Activated CD8-positive, alpha-beta T cell treated with anti-CD3 and anti-CD28 coated beads for 36 hours (primary cell): ENCODE measurements at regions of chr10 and their contacts with region 1.

Region 1: GRCh38 chr10:61903221-61903927 is 1.9 kb downstream of the ARID5B start:
- DNase-seq: peak; percentile 87
- ATAC-seq: peak; percentile 50
- H3K4me3 Mint-ChIP-seq: peak overlapping the region; percentile 86
- H3K27ac Mint-ChIP-seq: peak overlapping the region; percentile 97
- H3K4me1 Mint-ChIP-seq: peaks cover 38% of the 10 kb centered on the region
- H3K27me3 Mint-ChIP-seq: no peaks in the 10 kb centered on the region
- CTCF ChIP-seq: no peak

Region 2: DNA sequence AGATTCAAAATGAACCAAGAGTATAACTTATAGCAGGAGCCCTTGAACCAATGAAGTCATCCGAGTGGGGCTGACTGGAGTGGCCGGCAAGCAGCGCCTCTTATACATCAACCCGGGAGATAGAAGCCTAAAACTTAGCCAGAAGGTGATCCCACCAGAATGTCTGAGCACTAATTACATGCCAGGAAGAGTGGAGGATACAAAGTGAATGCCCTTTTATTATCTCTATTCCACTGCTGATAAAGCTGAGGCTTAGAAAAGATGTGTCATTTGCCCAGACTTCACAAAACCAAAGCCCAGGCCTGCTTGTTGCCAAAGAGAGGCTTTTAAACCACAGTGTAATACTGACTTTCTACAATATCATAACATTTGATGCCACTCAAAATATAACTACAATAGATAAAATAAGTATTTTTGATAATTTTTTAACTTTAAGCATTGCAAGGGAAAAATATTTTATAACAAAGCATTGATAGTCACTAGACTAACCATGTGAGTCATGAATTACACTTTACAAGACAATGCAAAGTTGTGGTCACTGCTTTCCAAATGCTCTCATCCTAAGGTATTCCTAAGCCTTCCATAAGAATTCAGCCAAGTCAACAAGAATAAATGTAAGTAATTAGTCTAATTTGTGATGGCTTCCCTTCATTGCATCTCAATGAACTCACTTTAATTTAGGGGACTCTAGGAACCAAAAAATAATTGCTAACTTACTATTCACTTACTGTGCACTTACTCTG is 60.4 kb before region 1 on chr10:
- CTCF ChIA-PET with region 1: no interaction called
- POLR2A ChIA-PET with region 1: no interaction called
- intact Hi-C with region 1: no loop called
- DNase-seq: no peak
- ATAC-seq: no peak
- H3K4me3 Mint-ChIP-seq: no peak overlapping the region
- H3K27ac Mint-ChIP-seq: no peak overlapping the region
- H3K4me1 Mint-ChIP-seq: peaks cover 10% of the 10 kb centered on the region
- H3K27me3 Mint-ChIP-seq: no peaks in the 10 kb centered on the region
- CTCF ChIP-seq: no peak

Region 3: GRCh38 chr10:61855771-61856170 is 47.6 kb before region 1 on chr10:
- CTCF ChIA-PET with region 1: no interaction called
- POLR2A ChIA-PET with region 1: no interaction called
- intact Hi-C with region 1: no loop called
- DNase-seq: no peak
- ATAC-seq: no peak
- H3K4me3 Mint-ChIP-seq: no peak overlapping the region
- H3K27ac Mint-ChIP-seq: no peak overlapping the region
- H3K4me1 Mint-ChIP-seq: no peaks in the 10 kb centered on the region
- H3K27me3 Mint-ChIP-seq: peaks cover 4% of the 10 kb centered on the region
- CTCF ChIP-seq: no peak

Region 4: DNA sequence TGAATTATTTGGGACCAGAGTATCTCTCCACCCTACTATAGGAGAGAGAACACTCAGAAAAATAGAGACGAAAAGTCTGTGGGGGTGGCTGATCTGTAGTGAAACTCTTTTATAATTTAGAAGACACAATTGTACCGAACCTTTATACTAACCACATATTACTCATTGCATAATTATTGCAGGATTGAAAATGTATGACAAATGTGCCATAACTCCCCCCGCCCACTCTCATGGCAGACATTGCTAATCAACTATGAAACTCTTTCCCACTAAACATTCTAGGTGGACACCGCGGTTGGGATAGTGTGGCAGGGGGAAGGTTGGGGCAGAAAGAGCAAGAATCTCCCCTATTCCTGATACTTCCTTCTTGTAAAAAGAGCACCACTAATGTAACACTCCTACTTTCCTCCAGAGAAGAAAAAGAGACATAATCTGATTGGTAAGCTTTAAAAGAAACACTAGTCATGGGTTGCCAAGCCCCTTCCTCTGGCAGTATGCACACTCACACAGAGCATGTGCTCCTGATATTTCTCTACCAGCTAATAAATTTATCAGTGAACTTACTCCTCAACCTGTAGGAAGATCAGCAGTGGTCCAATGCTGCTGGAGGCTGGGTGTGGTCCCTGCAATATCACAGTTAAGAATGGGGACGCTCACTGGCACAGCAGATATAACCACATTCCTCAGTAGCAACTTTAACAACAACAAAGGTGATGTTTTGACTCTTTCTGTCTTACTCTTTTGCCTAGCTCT is 20.6 kb before region 1 on chr10:
- CTCF ChIA-PET with region 1: interaction called, 50 read pairs
- POLR2A ChIA-PET with region 1: interaction called, 26 read pairs
- intact Hi-C with region 1: no loop called
- DNase-seq: peak; percentile 90
- ATAC-seq: peak; percentile 86
- H3K4me3 Mint-ChIP-seq: peak overlapping the region; percentile 43
- H3K27ac Mint-ChIP-seq: peak overlapping the region; percentile 95
- H3K4me1 Mint-ChIP-seq: peaks cover 30% of the 10 kb centered on the region
- H3K27me3 Mint-ChIP-seq: no peaks in the 10 kb centered on the region
- CTCF ChIP-seq: no peak

Region 5: GRCh38 chr10:61943674-61944410 is 40.5 kb after region 1 on chr10:
- CTCF ChIA-PET with region 1: interaction called, 98 read pairs
- POLR2A ChIA-PET with region 1: interaction called, 137 read pairs
- intact Hi-C with region 1: loop called (anchors 1 kb)
- DNase-seq: peak; percentile 58
- ATAC-seq: peak; percentile 77
- H3K4me3 Mint-ChIP-seq: peak overlapping the region; percentile 70
- H3K27ac Mint-ChIP-seq: peak overlapping the region; percentile 98
- H3K4me1 Mint-ChIP-seq: peaks cover 64% of the 10 kb centered on the region
- H3K27me3 Mint-ChIP-seq: no peaks in the 10 kb centered on the region
- CTCF ChIP-seq: no peak

Region 6: GRCh38 chr10:61992671-61993668 is 89.6 kb after region 1 on chr10:
- CTCF ChIA-PET with region 1: interaction called, 8 read pairs
- POLR2A ChIA-PET with region 1: interaction called, 17 read pairs
- intact Hi-C with region 1: loop called (anchors 2 kb)
- DNase-seq: peak; percentile 72
- ATAC-seq: peak; percentile 41
- H3K4me3 Mint-ChIP-seq: peak overlapping the region; percentile 68
- H3K27ac Mint-ChIP-seq: peak overlapping the region; percentile 95
- H3K4me1 Mint-ChIP-seq: peaks cover 66% of the 10 kb centered on the region
- H3K27me3 Mint-ChIP-seq: no peaks in the 10 kb centered on the region
- CTCF ChIP-seq: no peak

Region 7: GRCh38 chr10:62183442-62183841 is 280.1 kb after region 1 on chr10:
- CTCF ChIA-PET with region 1: interaction called, 3 read pairs
- POLR2A ChIA-PET with region 1: interaction called, 12 read pairs
- intact Hi-C with region 1: loop called (anchors 5 kb)
- DNase-seq: peak; percentile 63
- ATAC-seq: peak; percentile 64
- H3K4me3 Mint-ChIP-seq: peak overlapping the region; percentile 17
- H3K27ac Mint-ChIP-seq: peak overlapping the region; percentile 99
- H3K4me1 Mint-ChIP-seq: peaks cover 82% of the 10 kb centered on the region
- H3K27me3 Mint-ChIP-seq: no peaks in the 10 kb centered on the region
- CTCF ChIP-seq: no peak